BJ (cell line): ENCODE measurements at regions of chr15 and their contacts with region 1.

Region 1: DNA sequence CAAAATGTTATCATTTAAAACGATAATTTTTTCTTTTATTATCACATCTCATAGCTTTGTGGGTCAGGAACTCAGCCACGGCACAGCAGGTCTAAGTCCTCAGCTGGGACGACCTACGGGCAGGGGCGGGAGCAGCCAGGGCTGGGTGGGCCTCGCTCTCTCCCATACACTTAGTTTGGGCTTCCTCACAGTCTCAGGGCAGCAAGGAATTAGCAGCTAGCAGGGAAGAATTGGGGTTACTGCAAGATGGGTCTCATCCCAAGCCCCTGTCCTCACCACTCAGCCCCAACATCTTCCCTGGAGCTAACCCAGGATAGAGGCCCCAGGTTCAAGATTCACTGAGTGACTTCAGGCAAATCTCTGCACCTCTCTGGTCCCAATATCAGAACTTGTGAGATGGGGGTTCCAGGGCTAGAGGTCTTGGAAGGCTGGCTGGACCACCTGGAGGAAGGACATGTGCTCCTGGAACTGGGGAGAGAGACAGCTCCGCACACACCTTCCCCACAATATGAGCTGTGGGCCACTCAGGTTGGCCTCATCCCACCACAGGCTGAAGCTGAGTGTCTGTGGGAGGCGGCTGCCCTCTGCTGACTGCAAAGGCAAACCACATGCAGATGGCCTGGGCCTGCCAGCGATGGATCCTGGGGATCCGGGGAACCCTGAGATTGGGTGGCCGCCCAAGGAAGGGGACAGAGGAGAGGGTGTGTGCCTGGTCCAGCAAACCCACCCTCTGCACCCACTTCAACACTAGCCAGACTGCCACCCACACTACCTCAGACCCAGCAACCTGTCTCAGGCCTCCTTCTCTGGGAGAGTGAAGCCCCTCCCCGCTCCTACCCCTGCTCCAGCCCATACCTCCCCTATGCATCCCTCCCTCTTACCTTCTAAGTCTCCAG is 45.0 kb downstream of the CYP11A1 start:
- DNase-seq: no peak
- H3K4me3 ChIP-seq: no peak overlapping the region
- H3K27me3 ChIP-seq: no peaks in the 10 kb centered on the region
- CTCF ChIP-seq: peak; percentile 93

Region 2: GRCh38 chr15:74053941-74054529 is 268.4 kb before region 1 on chr15:
- CTCF ChIA-PET with region 1: interaction called, 163 read pairs
- POLR2A ChIA-PET with region 1: no interaction called
- DNase-seq: peak; percentile 51
- H3K4me3 ChIP-seq: no peak overlapping the region
- H3K27me3 ChIP-seq: no peaks in the 10 kb centered on the region
- CTCF ChIP-seq: peak; percentile 76

Region 3: DNA sequence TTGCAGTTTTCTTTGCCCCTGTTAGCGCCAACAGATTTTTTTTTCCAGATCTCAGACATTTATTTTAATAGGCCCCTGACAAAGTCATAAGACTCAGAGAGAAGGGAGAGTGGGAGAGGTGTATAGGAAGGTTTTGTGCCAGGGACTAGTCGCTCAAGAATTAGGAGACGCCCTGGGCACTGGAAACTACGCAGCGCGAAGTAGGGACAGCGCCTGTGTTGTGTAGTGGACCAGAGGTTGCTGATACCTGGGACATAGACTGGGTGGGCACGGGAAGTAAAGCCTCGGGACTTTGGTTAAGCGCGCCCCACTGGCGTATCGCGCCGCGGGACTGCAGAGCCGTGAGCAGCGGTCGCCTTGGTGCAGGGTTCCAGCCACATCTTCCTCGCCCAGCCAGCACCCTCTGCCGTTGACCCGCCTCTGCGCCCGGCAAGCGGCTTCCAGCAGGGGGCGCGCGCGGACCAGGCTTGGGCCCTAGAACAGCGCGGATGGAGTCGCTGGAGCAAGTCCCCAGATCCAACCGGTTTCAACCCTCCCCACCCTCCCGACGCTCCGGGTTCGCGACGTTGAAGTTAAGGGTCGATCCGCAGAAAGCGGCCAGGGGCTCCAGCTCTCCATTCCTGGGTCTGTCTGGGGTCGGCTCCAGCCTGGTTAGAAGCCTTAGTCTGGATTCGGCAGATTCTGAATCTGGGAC is 195.0 kb before region 1 on chr15:
- CTCF ChIA-PET with region 1: interaction called, 86 read pairs
- POLR2A ChIA-PET with region 1: no interaction called
- DNase-seq: no peak
- H3K4me3 ChIP-seq: peak overlapping the region; percentile 34
- H3K27me3 ChIP-seq: peaks cover 56% of the 10 kb centered on the region
- CTCF ChIP-seq: peak; percentile 100

Region 4: DNA sequence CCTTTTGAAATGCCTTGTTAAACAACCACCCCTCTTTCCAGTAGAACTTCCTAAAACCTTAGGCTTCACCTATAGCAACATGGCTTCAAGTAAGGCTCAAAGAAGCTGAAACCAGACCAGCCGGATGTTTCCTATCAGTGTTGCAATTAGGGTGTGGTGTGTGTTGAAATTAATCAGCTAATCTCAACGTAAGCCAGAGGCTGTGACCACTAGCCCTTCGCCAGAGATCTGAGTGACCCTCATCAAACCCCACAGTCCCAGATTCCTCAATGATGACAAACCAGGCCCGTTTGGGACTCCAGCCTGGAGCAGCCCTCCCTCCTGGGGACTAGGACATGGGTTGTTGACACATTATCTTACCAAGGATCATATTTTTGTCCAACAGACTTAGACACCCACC is 17.7 kb after region 1 on chr15:
- CTCF ChIA-PET with region 1: interaction called, 21 read pairs
- POLR2A ChIA-PET with region 1: no interaction called
- DNase-seq: peak; percentile 15
- H3K4me3 ChIP-seq: no peak overlapping the region
- H3K27me3 ChIP-seq: no peaks in the 10 kb centered on the region
- CTCF ChIP-seq: no peak

Region 5: DNA sequence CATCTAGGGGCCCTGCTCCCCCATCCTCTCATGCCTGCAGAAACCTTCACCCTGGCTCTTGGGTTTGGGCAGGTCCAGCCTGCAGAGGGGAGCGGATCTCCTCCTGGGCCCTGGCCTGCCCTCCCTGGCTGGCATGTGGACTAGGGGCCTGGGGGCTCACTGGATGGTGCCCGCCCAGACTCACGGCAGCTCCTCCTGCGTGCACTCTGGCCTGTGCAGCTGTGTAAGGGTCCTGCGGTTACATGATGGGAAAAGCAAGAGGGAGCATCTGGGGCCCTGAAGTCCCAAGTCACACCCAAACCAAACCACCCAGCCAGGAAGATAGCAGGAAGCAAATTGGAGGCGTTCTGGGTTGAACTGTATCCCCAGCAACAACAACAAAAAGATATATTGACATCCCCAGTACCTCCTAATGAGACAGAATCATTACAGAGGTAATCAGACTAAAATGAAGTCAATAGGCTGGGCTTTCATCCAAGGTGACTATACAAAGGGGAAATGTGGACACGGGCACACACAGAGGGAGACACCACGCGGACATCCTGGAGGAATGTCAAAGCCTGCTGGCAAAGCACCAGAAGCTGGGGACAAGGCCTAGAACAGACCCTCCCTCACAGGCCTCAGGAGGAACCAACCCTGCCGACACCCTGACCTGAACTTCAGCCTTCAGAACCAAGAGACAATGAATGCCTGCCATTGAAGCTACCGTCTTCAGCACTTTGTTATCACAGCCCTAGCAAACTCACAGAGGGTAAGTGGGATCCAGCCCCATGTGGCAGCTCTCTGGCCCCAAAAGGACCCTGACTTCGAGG is 282.8 kb after region 1 on chr15:
- CTCF ChIA-PET with region 1: no interaction called
- POLR2A ChIA-PET with region 1: no interaction called
- DNase-seq: no peak
- H3K4me3 ChIP-seq: no peak overlapping the region
- H3K27me3 ChIP-seq: peaks cover 5% of the 10 kb centered on the region
- CTCF ChIP-seq: no peak